ENCODE measurements at regions of chr14 and their contacts with region 1.

Region 1: DNA sequence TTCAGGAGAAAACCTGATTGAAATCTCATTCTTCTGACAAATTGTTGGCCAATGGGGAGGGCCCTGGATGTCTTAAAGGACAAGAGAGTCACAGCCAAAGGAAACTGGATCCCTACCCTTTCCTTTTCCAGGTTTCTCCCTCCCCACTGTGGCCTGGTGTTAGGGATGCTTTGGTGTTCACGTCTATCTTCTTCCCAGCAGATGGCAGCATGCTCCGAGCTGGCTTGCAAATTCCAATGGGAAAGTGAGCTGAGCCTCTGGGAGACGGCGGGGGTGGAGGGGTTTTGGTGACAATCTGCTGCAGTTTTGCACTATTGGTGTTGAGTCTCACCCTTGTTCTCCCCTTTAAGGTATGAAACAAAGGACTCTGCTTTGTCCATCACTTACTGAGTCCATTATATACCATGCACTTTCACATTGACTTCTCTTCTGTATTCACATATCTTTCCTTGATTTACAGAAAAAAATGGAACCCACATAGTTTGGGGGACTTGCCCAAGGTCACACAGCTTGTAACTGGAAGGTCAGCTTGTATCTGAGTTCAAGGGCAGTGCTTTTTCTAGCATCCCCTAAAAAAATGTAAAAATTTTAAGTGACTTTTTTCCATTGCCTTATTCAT is 39.3 kb downstream of the CCDC177 start:
- DNase-seq: no peak
- ATAC-seq: no peak

Region 2: DNA sequence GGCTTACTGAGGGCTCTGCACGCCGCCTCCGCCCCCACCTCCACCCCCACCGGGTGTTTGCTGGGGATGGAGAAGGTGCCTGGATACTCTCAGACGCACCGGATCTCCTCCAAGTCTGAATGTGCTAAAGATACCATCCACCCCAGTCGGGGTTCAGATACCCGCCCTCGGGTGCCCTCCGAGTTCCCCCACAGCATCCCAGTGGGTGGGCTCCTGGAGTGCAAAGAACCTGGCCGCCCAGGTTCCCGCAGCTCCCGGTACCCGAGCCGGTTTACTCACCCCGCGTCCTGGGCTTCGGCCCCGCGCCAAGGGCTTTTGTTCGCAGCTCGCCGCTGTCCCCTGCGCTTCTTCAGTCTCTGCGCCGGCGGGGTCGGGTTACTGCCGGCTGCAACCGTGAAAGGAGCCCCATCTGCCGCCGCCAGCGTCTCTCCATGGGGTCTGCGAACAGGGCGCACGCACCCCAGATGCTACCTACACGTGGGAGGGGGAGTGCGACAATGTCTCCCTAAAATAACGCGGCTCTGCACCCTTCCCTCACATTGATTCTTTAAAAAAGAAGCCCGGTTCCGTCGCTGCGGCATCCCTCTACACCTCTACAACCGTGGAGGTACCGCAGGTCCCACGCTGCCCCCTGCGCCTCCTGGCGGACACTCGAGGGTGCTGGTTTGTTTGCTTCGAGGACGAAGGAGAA is 39.1 kb after region 1 on chr14 and contains the start of gene CCDC177:
- intact Hi-C with region 1: loop called (anchors 5 kb)
- DNase-seq: peak; percentile 59
- ATAC-seq: peak; percentile 30
- total RNA-seq, gene CCDC177: not detected